Aorta (tissue), 5 donors: ENCODE measurements at regions of chr17 and their contacts with region 1.

Region 1: DNA sequence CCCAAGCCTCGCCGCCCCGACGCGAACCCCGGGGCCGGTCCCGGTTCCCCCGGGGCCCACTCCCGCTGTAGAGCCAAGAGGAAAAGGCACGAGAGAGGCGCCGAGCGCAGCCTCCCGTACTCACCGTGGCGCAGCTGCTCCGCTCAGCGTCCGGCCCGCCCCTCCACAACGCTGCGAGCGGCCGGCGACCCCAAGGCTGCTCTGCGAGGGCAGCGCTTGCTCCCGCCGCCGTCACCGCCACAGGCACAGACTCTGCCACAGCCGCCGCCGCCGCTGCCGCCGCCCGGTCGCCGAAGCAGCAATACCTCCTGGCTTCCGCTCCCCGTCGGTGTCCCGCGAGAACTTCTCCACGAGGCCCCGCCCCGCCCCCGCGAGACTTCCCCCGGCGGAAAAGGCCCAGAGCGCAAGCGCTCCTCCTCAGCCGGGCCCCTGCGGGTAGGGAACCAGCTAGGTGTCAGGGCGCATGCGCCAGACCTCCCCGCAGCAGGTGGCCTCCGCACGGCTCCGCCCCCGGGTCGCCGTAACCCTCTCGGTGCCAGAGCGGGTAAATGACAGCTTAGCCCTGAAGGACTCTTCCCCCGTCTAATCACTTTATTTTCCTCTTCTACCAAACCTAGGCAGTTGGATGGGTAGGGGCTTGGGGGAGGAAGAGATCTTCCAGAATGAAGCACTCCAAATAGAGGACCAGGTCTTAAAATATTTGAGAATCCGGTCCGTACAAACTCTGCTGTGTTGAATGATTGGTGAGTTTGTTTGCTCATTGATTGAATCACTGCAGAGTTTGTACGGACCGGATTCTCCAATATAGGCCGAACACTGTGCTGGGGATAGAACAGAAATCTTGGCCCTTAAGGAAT is at the start of gene GRB2:
- DNase-seq: peak; percentile 100
- ATAC-seq: peak; percentile 99
- H3K4me3 ChIP-seq: peak within 1 kb of the TSS; percentile 81 to 97
- H3K27ac ChIP-seq: peak within 1 kb of the TSS; percentile 9 to 92
- H3K4me1 ChIP-seq: peaks cover 0 to 3% of the 10 kb centered on the region in 2 donors
- H3K27me3 ChIP-seq: no peaks in the 10 kb centered on the region
- total RNA-seq, gene GRB2: 96.8 to 106 TPM

Region 2: DNA sequence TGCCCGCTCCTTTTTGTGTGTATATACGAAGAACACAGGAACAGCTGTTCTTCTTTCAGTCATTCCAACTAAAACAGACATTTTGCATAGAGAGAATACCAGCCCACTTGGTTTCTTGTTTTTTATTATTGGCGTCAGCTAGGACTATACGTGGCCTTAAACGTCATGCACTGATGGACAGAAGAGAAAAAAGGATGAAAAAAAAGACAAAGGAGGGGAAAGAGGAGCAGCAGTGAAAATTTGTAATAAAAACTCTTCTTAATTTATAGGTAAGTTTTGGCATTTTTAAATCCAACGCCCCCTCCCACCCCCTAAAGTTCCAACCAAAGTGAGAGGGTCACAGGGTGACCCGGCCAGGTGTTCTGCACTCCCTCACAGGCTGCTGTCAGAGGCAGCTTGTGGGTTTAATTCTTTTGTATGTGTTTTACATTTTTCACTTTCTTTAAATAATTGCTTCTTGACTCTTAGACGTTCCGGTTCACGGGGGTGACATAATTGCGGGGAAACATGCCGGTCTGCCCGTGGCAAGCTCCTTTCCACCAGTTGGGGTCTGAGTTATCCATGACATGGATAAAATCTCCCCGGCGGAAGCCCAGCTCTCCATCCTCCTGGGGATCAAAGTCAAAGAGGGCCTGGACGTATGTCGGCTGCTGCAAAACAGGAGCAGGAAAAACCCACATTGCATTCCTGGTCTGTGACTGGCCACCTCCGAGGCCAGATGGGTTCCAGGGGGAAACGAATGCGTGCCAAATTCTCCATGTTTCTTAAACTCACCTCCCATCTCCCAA is 85.5 kb before region 1 on chr17:
- intact Hi-C with region 1: loop called (anchors 2 kb)
- DNase-seq: no peak
- ATAC-seq: no peak
- H3K4me3 ChIP-seq: no peak overlapping the region
- H3K27ac ChIP-seq: no peak overlapping the region
- H3K4me1 ChIP-seq: no peaks in the 10 kb centered on the region
- H3K27me3 ChIP-seq: no peaks in the 10 kb centered on the region

Region 3: GRCh38 chr17:75364078-75364477 is 41.5 kb before region 1 on chr17:
- intact Hi-C with region 1: loop called in 1 of 2 experiments (anchors 5 kb)
- DNase-seq: no peak
- ATAC-seq: no peak
- H3K4me3 ChIP-seq: no peak overlapping the region
- H3K27ac ChIP-seq: no peak overlapping the region
- H3K4me1 ChIP-seq: peaks cover 4 to 10% of the 10 kb centered on the region in 2 donors
- H3K27me3 ChIP-seq: no peaks in the 10 kb centered on the region

Region 4: GRCh38 chr17:75442168-75443103 is 36.8 kb after region 1 on chr17:
- intact Hi-C with region 1: no loop called
- DNase-seq: no peak
- ATAC-seq: no peak
- H3K4me3 ChIP-seq: no peak overlapping the region
- H3K27ac ChIP-seq: peak overlapping the region; percentile 43 to 64
- H3K4me1 ChIP-seq: no peaks in the 10 kb centered on the region
- H3K27me3 ChIP-seq: no peaks in the 10 kb centered on the region

Region 5: GRCh38 chr17:75487351-75488070 is 81.9 kb after region 1 on chr17:
- intact Hi-C with region 1: no loop called
- DNase-seq: peak in 1 of 2 donors; percentile 80
- ATAC-seq: no peak
- H3K4me3 ChIP-seq: no peak overlapping the region
- H3K27ac ChIP-seq: no peak overlapping the region
- H3K4me1 ChIP-seq: no peaks in the 10 kb centered on the region
- H3K27me3 ChIP-seq: no peaks in the 10 kb centered on the region